Activated naive CD4-positive, alpha-beta T cell treated with anti-CD3 and anti-CD28 coated beads for 36 hours (primary cell): ENCODE measurements at regions of chr4 and their contacts with region 1.

Region 1: GRCh38 chr4:27000820-27001219 is 140.2 kb downstream of the STIM2 start:
- DNase-seq: peak; percentile 30
- H3K4me3 Mint-ChIP-seq: no peak overlapping the region
- H3K27ac Mint-ChIP-seq: no peak overlapping the region
- H3K4me1 Mint-ChIP-seq: peaks cover 63% of the 10 kb centered on the region
- H3K27me3 Mint-ChIP-seq: no peaks in the 10 kb centered on the region

Region 2: DNA sequence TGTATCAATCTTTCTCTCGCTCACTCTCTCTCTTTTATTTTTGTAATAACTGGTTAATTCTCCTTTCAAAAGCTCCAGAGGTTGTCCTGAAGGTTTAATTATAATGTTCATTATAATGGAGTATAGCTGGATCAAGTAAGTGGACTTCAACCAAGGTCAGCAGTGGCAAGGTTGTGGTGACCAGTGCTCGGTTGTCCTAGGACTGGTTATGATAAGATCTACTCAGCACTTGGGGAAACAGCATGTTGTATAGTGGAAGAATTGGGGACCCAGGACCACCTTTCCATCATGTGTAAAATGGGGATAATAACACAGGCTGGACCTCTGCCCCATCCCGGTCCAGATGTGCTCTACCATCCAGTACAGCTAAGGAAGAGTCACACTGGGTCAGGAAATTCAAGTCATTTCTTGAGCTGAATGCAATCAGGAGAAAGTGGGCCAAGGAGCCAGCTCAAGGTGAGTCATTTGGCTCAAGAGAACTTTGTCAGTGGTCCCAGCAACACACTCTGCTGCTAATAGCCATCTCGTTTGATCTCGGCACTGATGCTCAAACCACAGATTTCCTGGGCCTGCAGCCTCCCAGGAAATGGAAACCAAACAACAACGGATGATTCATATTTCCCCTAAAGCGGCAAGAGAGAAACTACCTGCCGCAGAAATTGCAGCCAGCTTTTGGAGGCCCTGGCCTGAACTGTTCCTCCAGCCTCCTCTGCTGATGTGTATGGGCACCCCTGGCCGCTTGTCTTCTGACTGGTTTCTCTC is 803.6 kb before region 1 on chr4:
- CTCF ChIA-PET with region 1: no interaction called
- intact Hi-C with region 1: loop called (anchors 5 kb)
- DNase-seq: peak; percentile 86
- H3K4me3 Mint-ChIP-seq: peak overlapping the region; percentile 0
- H3K27ac Mint-ChIP-seq: peak overlapping the region; percentile 88
- H3K4me1 Mint-ChIP-seq: peaks cover 72% of the 10 kb centered on the region
- H3K27me3 Mint-ChIP-seq: peaks cover 1% of the 10 kb centered on the region

Region 3: GRCh38 chr4:26746802-26747213 is 254.0 kb before region 1 on chr4:
- CTCF ChIA-PET with region 1: no interaction called
- intact Hi-C with region 1: loop called (anchors 2 kb)
- DNase-seq: peak; percentile 68
- H3K4me3 Mint-ChIP-seq: no peak overlapping the region
- H3K27ac Mint-ChIP-seq: no peak overlapping the region
- H3K4me1 Mint-ChIP-seq: peaks cover 7% of the 10 kb centered on the region
- H3K27me3 Mint-ChIP-seq: no peaks in the 10 kb centered on the region

Region 4: GRCh38 chr4:26878794-26879391 is 121.9 kb before region 1 on chr4:
- CTCF ChIA-PET with region 1: no interaction called
- intact Hi-C with region 1: loop called (anchors 1 kb)
- DNase-seq: no peak
- H3K4me3 Mint-ChIP-seq: peak overlapping the region; percentile 63
- H3K27ac Mint-ChIP-seq: peak overlapping the region; percentile 99
- H3K4me1 Mint-ChIP-seq: peaks cover 80% of the 10 kb centered on the region
- H3K27me3 Mint-ChIP-seq: no peaks in the 10 kb centered on the region

Region 5: GRCh38 chr4:26964512-26964911 is 36.3 kb before region 1 on chr4:
- CTCF ChIA-PET with region 1: no interaction called
- intact Hi-C with region 1: loop called (anchors 1 kb)
- DNase-seq: no peak
- H3K4me3 Mint-ChIP-seq: no peak overlapping the region
- H3K27ac Mint-ChIP-seq: no peak overlapping the region
- H3K4me1 Mint-ChIP-seq: peaks cover 46% of the 10 kb centered on the region
- H3K27me3 Mint-ChIP-seq: no peaks in the 10 kb centered on the region

Region 6: DNA sequence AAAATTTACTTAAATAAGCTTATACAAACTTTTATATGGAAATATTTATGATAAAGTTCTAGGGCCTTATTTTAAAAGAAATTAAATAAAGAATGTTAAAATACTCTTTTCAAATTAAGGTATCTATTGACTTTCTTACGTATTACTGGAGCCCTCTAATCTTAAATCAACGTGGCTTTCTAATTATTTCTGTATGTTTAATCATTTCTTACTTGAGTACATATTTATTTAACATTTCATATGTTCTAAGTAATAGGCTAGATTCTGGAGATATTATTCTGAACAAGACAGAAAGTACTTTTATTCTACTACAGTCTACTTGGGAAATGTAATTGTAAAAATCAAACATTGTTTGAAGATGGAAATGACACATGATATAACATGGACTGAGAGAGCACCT is 1734.7 kb after region 1 on chr4:
- CTCF ChIA-PET with region 1: no interaction called
- intact Hi-C with region 1: no loop called
- DNase-seq: no peak
- H3K4me3 Mint-ChIP-seq: no peak overlapping the region
- H3K27ac Mint-ChIP-seq: no peak overlapping the region
- H3K4me1 Mint-ChIP-seq: no peaks in the 10 kb centered on the region
- H3K27me3 Mint-ChIP-seq: no peaks in the 10 kb centered on the region